WTC11 (cell line): ENCODE measurements at regions of chr3 and their contacts with region 1.

Region 1: DNA sequence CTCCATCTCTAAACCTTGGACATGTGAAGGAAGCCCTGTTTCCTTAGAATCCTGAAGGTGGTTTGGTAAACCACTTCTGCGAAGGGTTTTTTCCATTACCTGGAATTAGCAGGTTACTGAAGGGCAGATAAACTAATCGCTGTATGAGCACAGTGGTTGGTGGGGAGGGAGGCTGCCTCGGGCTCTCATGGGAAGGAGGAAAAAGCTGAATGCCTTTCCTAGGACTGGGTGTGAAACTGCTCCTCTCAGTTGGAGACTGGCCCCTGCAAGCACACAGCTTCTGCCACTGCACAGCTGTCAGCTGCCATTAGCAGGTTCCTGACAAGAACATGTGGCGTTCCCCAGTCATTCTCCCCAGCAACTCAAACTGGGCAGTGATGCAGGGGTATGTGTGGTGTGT is 376.3 kb downstream of the GAP43 start:
- DNase-seq: no peak
- ATAC-seq: peak; percentile 60
- H3K4me3 Mint-ChIP-seq: no peak overlapping the region
- H3K27ac Mint-ChIP-seq: no peak overlapping the region
- H3K4me1 Mint-ChIP-seq: peaks cover 17% of the 10 kb centered on the region
- H3K27me3 Mint-ChIP-seq: no peaks in the 10 kb centered on the region
- CTCF ChIP-seq: no peak

Region 2: GRCh38 chr3:115885621-115886020 is 114.0 kb before region 1 on chr3:
- CTCF ChIA-PET with region 1: no interaction called
- POLR2A ChIA-PET with region 1: no interaction called
- DNase-seq: peak; percentile 10
- ATAC-seq: peak; percentile 64
- H3K4me3 Mint-ChIP-seq: no peak overlapping the region
- H3K27ac Mint-ChIP-seq: no peak overlapping the region
- H3K4me1 Mint-ChIP-seq: no peaks in the 10 kb centered on the region
- H3K27me3 Mint-ChIP-seq: no peaks in the 10 kb centered on the region
- CTCF ChIP-seq: no peak

Region 3: GRCh38 chr3:115986555-115987207 is 12.9 kb before region 1 on chr3:
- CTCF ChIA-PET with region 1: interaction called, 12 read pairs
- POLR2A ChIA-PET with region 1: no interaction called
- DNase-seq: peak; percentile 17
- ATAC-seq: peak; percentile 83
- H3K4me3 Mint-ChIP-seq: no peak overlapping the region
- H3K27ac Mint-ChIP-seq: no peak overlapping the region
- H3K4me1 Mint-ChIP-seq: peaks cover 43% of the 10 kb centered on the region
- H3K27me3 Mint-ChIP-seq: no peaks in the 10 kb centered on the region
- CTCF ChIP-seq: peak; percentile 33; the same call in 1 of the 2 replicates

Region 4: DNA sequence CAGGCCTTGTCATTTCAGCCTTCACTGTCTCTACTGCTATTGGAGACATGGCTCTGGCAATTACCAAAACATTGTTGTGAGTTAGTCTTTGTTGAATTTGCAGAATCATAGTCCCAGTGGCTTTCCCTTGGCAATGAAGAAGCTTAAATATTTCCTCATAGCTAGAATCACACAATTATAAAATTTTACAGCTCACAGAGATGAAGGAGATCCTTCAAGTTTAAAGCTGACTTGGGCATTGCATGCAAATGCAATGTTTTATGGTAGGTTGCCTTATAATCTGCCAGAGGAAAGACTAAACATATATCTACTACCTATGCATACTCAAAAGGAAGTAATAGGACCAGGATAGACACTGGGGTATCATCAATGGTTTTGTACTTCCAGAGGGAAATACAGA is 354.8 kb after region 1 on chr3:
- CTCF ChIA-PET with region 1: no interaction called
- POLR2A ChIA-PET with region 1: no interaction called
- DNase-seq: no peak
- ATAC-seq: no peak
- H3K4me3 Mint-ChIP-seq: no peak overlapping the region
- H3K27ac Mint-ChIP-seq: no peak overlapping the region
- H3K4me1 Mint-ChIP-seq: peaks cover 17% of the 10 kb centered on the region; the same call in 1 of the 2 replicates
- H3K27me3 Mint-ChIP-seq: no peaks in the 10 kb centered on the region
- CTCF ChIP-seq: no peak